HepG2 (cell line): ENCODE measurements at regions of chr12 and their contacts with region 1.

Region 1: GRCh38 chr12:57846577-57847319 is at the start of gene CTDSP2:
- DNase-seq: peak; percentile 95
- ATAC-seq: peak; percentile 44
- H3K4me3 ChIP-seq: peak within 1 kb of the TSS; percentile 90 to 100 (median 99)
- H3K27ac ChIP-seq: peak within 1 kb of the TSS; percentile 99
- H3K4me1 ChIP-seq: peaks cover 45% of the 10 kb centered on the region
- H3K27me3 ChIP-seq: peaks cover 0 to 28% of the 10 kb centered on the region in 2 experiments; a peak in 3 of 5 replicates
- CTCF ChIP-seq: 0 out of 2 replicates have a peak, but pooled peaks have one; percentile 13
- EP300 ChIP-seq: peak in 1 of 2 experiments; percentile 11; a peak in 2 of 4 replicates
- POLR2A ChIP-seq: peak; percentile 44 to 72; a peak in 3 of 4 replicates
- RAD21 ChIP-seq: 0 out of 2 replicates have a peak, but pooled peaks have one; percentile 3
- total RNA-seq, gene CTDSP2: 38.1 and 42.4 TPM in 2 replicates

Region 2: GRCh38 chr12:57410534-57410933 is 436.2 kb before region 1 on chr12:
- CTCF ChIA-PET with region 1: no interaction called
- POLR2A ChIA-PET with region 1: no interaction called
- in situ Hi-C with region 1: no loop called
- intact Hi-C with region 1: no loop called
- DNase-seq: no peak
- ATAC-seq: no peak
- H3K4me3 ChIP-seq: no peak overlapping the region
- H3K27ac ChIP-seq: no peak overlapping the region
- H3K4me1 ChIP-seq: no peaks in the 10 kb centered on the region
- H3K27me3 ChIP-seq: no peaks in the 10 kb centered on the region
- CTCF ChIP-seq: no peak
- EP300 ChIP-seq: no peak
- POLR2A ChIP-seq: no peak
- RAD21 ChIP-seq: no peak

Region 3: GRCh38 chr12:57830393-57830792 is 16.4 kb before region 1 on chr12:
- CTCF ChIA-PET with region 1: interaction called, 3 read pairs
- POLR2A ChIA-PET with region 1: interaction called, 7 read pairs
- in situ Hi-C with region 1: no loop called
- intact Hi-C with region 1: loop called (anchors 2 kb)
- DNase-seq: no peak
- ATAC-seq: no peak
- H3K4me3 ChIP-seq: no peak overlapping the region
- H3K27ac ChIP-seq: no peak overlapping the region
- H3K4me1 ChIP-seq: peaks cover 30% of the 10 kb centered on the region
- H3K27me3 ChIP-seq: no peaks in the 10 kb centered on the region
- CTCF ChIP-seq: no peak
- EP300 ChIP-seq: no peak
- POLR2A ChIP-seq: no peak
- RAD21 ChIP-seq: no peak

Region 4: DNA sequence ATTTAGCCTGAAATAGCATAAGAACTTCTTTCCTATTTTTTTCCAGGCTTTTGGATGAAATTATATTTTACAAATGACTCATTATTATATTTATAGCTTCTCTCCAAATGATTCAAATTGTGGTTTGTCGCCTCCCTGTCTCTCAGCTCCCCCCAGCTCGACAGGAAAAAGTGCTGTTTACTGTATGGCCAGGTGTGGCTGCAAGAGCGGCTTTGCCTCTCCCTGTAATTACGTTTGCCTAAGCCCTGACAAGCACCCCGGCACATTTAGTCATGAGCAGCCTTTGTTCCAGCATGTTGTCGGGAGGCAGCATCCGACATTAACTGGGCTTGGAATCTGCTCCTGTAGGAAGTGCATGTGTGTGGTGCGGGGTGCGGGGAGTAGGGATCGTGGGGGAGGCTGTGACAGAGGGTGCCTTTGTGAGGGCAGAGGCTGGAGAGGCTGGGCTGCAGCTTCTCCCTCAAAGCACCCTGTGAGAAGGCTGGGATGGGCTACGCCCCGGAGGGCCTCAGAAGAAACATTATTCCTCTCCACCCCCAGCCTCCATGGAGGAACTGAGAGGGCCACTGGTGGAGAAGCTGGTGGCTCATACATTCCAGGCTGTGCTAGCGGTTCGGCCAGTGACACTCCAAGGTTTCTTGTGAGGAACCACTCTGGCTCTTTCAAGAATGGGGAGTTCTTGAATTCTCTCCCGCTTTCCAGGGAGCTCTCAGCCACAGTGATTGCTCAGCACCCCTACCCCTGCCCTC is 41.8 kb after region 1 on chr12:
- CTCF ChIA-PET with region 1: no interaction called
- POLR2A ChIA-PET with region 1: interaction called, 110 read pairs
- in situ Hi-C with region 1: no loop called
- intact Hi-C with region 1: no loop called
- DNase-seq: no peak
- ATAC-seq: peak; percentile 62
- H3K4me3 ChIP-seq: peak overlapping the region; percentile 1 to 47 (median 20); a peak in 2 of 6 replicates
- H3K27ac ChIP-seq: no peak overlapping the region
- H3K4me1 ChIP-seq: peaks cover 35% of the 10 kb centered on the region
- H3K27me3 ChIP-seq: peaks cover 10 to 45% of the 10 kb centered on the region in 2 experiments; a peak in 4 of 5 replicates
- CTCF ChIP-seq: no peak
- EP300 ChIP-seq: no peak
- POLR2A ChIP-seq: no peak
- RAD21 ChIP-seq: no peak

Region 5: GRCh38 chr12:57904848-57905811 is 58.4 kb after region 1 on chr12:
- CTCF ChIA-PET with region 1: interaction called, 6 read pairs
- POLR2A ChIA-PET with region 1: interaction called, 11 read pairs
- in situ Hi-C with region 1: no loop called
- intact Hi-C with region 1: no loop called
- DNase-seq: peak; percentile 82
- ATAC-seq: peak; percentile 89
- H3K4me3 ChIP-seq: peak overlapping the region in 1 of 3 experiments; percentile 9; a peak in 2 of 6 replicates
- H3K27ac ChIP-seq: no peak overlapping the region
- H3K4me1 ChIP-seq: peaks cover 26% of the 10 kb centered on the region
- H3K27me3 ChIP-seq: peaks cover 0 to 30% of the 10 kb centered on the region in 2 experiments; a peak in 4 of 5 replicates
- CTCF ChIP-seq: peak; percentile 99
- EP300 ChIP-seq: no peak
- POLR2A ChIP-seq: no peak
- RAD21 ChIP-seq: peak; percentile 98

Region 6: GRCh38 chr12:58435647-58436046 is 588.9 kb after region 1 on chr12:
- CTCF ChIA-PET with region 1: no interaction called
- POLR2A ChIA-PET with region 1: no interaction called
- in situ Hi-C with region 1: no loop called
- intact Hi-C with region 1: no loop called
- DNase-seq: no peak
- ATAC-seq: no peak
- H3K4me3 ChIP-seq: no peak overlapping the region
- H3K27ac ChIP-seq: no peak overlapping the region
- H3K4me1 ChIP-seq: no peaks in the 10 kb centered on the region
- H3K27me3 ChIP-seq: no peaks in the 10 kb centered on the region
- CTCF ChIP-seq: no peak
- EP300 ChIP-seq: no peak
- POLR2A ChIP-seq: no peak
- RAD21 ChIP-seq: no peak